CD4-positive, alpha-beta T cell (primary cell): ENCODE measurements at regions of chr4 and their contacts with region 1.

Region 1: DNA sequence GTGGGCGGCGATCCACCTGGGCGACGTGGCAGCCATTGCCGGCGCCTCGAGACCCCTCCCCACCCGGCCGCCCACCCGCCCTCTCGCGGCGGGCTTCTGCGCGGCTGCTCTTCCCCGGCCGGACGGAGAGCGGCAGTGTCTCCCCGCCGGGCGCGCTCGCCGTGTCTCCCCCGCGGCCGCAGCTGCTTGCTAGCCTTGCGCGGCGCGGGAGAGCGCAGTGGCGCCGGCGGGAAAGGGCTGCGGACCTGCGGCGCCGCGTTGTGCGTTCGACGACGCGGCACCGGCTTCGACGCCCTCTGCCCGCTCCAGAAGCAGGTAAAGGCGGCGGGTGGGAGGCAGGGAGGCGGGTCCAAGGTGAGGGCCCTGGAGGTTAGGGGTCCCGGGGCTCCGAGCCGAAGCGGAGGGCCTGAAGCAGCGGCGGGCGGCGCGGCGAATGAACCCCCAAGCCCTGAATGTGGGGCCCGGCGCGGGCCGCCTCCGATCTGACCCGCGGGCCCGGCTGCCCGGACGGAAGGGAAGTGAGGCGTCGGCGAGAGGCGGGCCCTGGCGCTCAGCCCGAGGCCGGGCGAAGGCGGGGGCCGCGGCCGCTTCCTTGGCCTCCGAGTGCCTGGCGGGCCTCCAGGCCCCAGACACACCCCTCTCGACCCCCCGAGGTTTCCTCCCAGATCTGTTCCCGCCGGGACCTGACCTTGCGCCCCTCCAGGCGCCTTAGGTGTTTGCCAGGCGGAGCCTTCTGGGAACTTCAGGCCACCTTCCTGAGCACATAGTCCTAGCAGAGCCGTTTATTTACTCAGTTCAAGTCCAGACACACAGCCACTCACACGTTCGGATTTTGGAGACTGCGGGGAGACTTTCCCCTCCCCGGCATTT is at the start of gene N4BP2:
- DNase-seq: peak; percentile 54 to 91 (median 71)
- ATAC-seq: peak; percentile 66
- H3K4me3 ChIP-seq: peak within 1 kb of the TSS; percentile 96
- H3K4me3 Mint-ChIP-seq: peak within 1 kb of the TSS; percentile 95
- H3K27ac ChIP-seq: peak within 1 kb of the TSS; percentile 83 to 89
- H3K27ac Mint-ChIP-seq: peak within 1 kb of the TSS; percentile 94
- H3K4me1 ChIP-seq: peaks cover 29% of the 10 kb centered on the region
- H3K4me1 Mint-ChIP-seq: peaks cover 40% of the 10 kb centered on the region
- H3K27me3 ChIP-seq: no peaks in the 10 kb centered on the region
- H3K27me3 Mint-ChIP-seq: no peaks in the 10 kb centered on the region
- CTCF ChIP-seq: peak; percentile 77
- total RNA-seq, gene N4BP2: 21.7 to 25.2 TPM

Region 2: GRCh38 chr4:39484582-39485272 is 572.2 kb before region 1 on chr4:
- CTCF ChIA-PET with region 1: no interaction called
- POLR2A ChIA-PET with region 1: no interaction called
- intact Hi-C with region 1: no loop called
- DNase-seq: no peak
- ATAC-seq: no peak
- H3K4me3 ChIP-seq: no peak overlapping the region
- H3K4me3 Mint-ChIP-seq: no peak overlapping the region
- H3K27ac ChIP-seq: no peak overlapping the region
- H3K27ac Mint-ChIP-seq: no peak overlapping the region
- H3K4me1 ChIP-seq: no peaks in the 10 kb centered on the region
- H3K4me1 Mint-ChIP-seq: no peaks in the 10 kb centered on the region
- H3K27me3 ChIP-seq: no peaks in the 10 kb centered on the region
- H3K27me3 Mint-ChIP-seq: no peaks in the 10 kb centered on the region
- CTCF ChIP-seq: no peak

Region 3: DNA sequence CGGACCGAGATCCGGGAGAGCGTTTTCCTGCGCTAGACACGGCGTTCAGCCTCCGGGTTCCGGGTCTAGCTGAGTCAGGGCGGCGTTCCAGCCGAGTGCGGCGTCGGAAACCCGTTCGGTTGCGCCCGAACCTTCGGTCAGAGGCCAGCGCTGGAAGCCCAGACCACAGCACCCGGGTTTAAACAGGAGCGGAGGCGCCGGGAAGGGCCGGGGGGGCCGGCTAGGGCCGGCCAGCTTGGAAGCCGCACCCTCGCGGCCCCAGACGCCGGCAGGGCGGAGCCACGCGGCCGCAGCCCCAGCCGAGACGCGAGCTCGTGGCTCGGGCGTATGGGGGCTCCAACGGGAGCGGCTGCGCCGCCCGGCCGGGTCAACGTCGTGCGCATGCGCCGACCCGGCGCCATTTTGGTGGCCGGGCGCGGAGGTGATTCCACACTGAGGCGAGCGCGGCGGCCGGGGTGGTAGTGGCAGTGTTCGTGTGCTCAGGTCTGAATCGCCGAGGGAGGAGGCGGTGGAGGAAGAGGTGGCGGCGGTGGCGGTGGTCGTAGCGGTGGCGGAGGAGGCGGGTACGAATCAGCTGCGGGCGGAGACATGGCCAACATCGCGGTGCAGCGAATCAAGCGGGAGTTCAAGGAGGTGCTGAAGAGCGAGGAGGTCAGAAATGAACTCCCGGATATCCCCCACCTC is 359.1 kb before region 1 on chr4 and contains the start of gene UBE2K:
- CTCF ChIA-PET with region 1: no interaction called
- POLR2A ChIA-PET with region 1: interaction called, 9 read pairs
- intact Hi-C with region 1: loop called in 1 of 2 experiments (anchors 2 kb)
- DNase-seq: peak; percentile 78 to 96 (median 86)
- ATAC-seq: peak; percentile 83
- H3K4me3 ChIP-seq: peak within 1 kb of the TSS; percentile 99
- H3K4me3 Mint-ChIP-seq: peak within 1 kb of the TSS; percentile 96
- H3K27ac ChIP-seq: peak within 1 kb of the TSS; percentile 92 to 93
- H3K27ac Mint-ChIP-seq: peak within 1 kb of the TSS; percentile 91
- H3K4me1 ChIP-seq: peaks cover 17% of the 10 kb centered on the region
- H3K4me1 Mint-ChIP-seq: peaks cover 56% of the 10 kb centered on the region
- H3K27me3 ChIP-seq: no peaks in the 10 kb centered on the region
- H3K27me3 Mint-ChIP-seq: no peaks in the 10 kb centered on the region
- CTCF ChIP-seq: no peak
- total RNA-seq, gene UBE2K: 35.9 to 41.3 TPM

Region 4: DNA sequence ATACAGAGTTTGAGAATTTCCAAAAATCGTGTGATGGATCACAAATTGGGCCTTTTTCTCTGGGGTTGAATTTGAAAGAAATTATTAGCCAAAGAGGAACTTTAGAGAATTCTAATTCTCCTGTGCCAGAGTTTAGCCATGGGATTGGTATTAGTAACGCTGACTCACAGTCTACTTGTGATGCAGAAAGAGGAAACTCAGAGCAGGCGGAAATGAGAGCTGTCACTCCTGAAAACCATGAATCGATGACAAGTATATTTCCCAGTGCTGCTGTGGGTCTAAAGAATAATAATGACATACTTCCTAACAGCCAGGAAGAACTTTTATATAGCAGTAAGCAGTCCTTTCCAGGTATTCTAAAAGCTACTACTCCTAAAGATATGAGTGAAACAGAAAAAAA is 64.6 kb after region 1 on chr4:
- CTCF ChIA-PET with region 1: interaction called, 3 read pairs
- POLR2A ChIA-PET with region 1: no interaction called
- intact Hi-C with region 1: loop called in 1 of 2 experiments (anchors 5 kb)
- DNase-seq: peak in 4 of 14 experiments; percentile 19 to 68 (median 45)
- ATAC-seq: no peak
- H3K4me3 ChIP-seq: no peak overlapping the region
- H3K4me3 Mint-ChIP-seq: no peak overlapping the region
- H3K27ac ChIP-seq: no peak overlapping the region
- H3K27ac Mint-ChIP-seq: peak overlapping the region; percentile 58
- H3K4me1 ChIP-seq: peaks cover 16% of the 10 kb centered on the region
- H3K4me1 Mint-ChIP-seq: peaks cover 50% of the 10 kb centered on the region
- H3K27me3 ChIP-seq: no peaks in the 10 kb centered on the region
- H3K27me3 Mint-ChIP-seq: no peaks in the 10 kb centered on the region
- CTCF ChIP-seq: no peak

Region 5: GRCh38 chr4:40193016-40193571 is 136.1 kb after region 1 on chr4:
- CTCF ChIA-PET with region 1: no interaction called
- POLR2A ChIA-PET with region 1: interaction called, 19 read pairs
- intact Hi-C with region 1: loop called in 1 of 2 experiments (anchors 5 kb)
- DNase-seq: peak in 8 of 14 experiments; percentile 43 to 79 (median 51)
- ATAC-seq: peak; percentile 25
- H3K4me3 ChIP-seq: peak overlapping the region; percentile 74
- H3K4me3 Mint-ChIP-seq: peak overlapping the region; percentile 94
- H3K27ac ChIP-seq: peak overlapping the region; percentile 67 to 99
- H3K27ac Mint-ChIP-seq: peak overlapping the region; percentile 99
- H3K4me1 ChIP-seq: peaks cover 43% of the 10 kb centered on the region
- H3K4me1 Mint-ChIP-seq: peaks cover 72% of the 10 kb centered on the region
- H3K27me3 ChIP-seq: no peaks in the 10 kb centered on the region
- H3K27me3 Mint-ChIP-seq: peaks cover 5% of the 10 kb centered on the region
- CTCF ChIP-seq: no peak

Region 6: GRCh38 chr4:40238700-40239548 is 182.0 kb after region 1 on chr4:
- CTCF ChIA-PET with region 1: no interaction called
- POLR2A ChIA-PET with region 1: interaction called, 4 read pairs
- intact Hi-C with region 1: loop called in 1 of 2 experiments (anchors 5 kb)
- DNase-seq: peak; percentile 50 to 95 (median 69)
- ATAC-seq: peak; percentile 93
- H3K4me3 ChIP-seq: peak overlapping the region; percentile 46
- H3K4me3 Mint-ChIP-seq: peak overlapping the region; percentile 55
- H3K27ac ChIP-seq: peak overlapping the region; percentile 79 to 97
- H3K27ac Mint-ChIP-seq: peak overlapping the region; percentile 93
- H3K4me1 ChIP-seq: peaks cover 99% of the 10 kb centered on the region
- H3K4me1 Mint-ChIP-seq: peaks cover 92% of the 10 kb centered on the region
- H3K27me3 ChIP-seq: no peaks in the 10 kb centered on the region
- H3K27me3 Mint-ChIP-seq: no peaks in the 10 kb centered on the region
- CTCF ChIP-seq: no peak

Region 7: DNA sequence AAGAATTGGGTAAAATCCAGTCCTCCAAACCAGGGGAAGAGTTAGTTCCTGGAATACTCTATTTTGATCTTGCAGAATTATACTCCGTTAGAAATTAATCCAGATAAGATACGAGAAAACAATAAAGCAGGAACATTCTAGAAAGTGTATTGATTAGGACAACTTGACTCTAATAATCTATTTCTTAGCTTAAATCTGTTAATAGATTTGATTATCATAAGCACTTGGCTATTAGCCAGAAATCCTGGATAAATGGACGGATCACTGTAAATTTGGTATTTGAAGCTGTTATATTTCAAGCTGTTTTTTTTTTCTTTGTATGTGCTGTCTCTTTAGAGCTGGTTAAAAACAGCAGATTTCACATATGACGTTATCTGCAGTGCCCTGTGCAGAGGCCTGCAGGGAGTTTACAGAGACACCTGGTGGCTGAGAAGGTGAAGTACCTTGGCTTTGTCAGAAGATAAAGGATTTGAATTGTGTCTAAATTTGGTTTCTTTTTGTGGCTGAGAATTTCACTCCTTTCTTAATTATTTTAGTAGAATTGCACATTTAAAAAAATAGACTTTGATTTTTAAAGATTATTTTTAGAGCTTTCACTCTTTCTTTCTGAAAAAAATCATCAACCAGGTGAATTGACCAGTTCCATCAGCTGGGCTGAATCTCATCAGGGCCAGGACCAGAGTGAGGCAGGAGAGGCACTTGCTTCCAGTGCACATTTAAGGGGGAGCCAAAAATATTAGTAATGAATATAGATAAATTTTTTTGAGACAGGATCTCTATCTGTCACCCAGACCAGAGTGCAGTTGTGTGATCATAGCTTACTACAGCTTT is 268.5 kb after region 1 on chr4:
- CTCF ChIA-PET with region 1: interaction called, 10 read pairs
- POLR2A ChIA-PET with region 1: interaction called, 13 read pairs
- intact Hi-C with region 1: loop called (anchors 1 to 2 kb)
- DNase-seq: peak; percentile 46 to 89 (median 56)
- ATAC-seq: peak; percentile 100
- H3K4me3 ChIP-seq: no peak overlapping the region
- H3K4me3 Mint-ChIP-seq: no peak overlapping the region
- H3K27ac ChIP-seq: no peak overlapping the region
- H3K27ac Mint-ChIP-seq: peak overlapping the region; percentile 6
- H3K4me1 ChIP-seq: no peaks in the 10 kb centered on the region
- H3K4me1 Mint-ChIP-seq: peaks cover 21% of the 10 kb centered on the region
- H3K27me3 ChIP-seq: no peaks in the 10 kb centered on the region
- H3K27me3 Mint-ChIP-seq: no peaks in the 10 kb centered on the region
- CTCF ChIP-seq: peak; percentile 89

Region 8: DNA sequence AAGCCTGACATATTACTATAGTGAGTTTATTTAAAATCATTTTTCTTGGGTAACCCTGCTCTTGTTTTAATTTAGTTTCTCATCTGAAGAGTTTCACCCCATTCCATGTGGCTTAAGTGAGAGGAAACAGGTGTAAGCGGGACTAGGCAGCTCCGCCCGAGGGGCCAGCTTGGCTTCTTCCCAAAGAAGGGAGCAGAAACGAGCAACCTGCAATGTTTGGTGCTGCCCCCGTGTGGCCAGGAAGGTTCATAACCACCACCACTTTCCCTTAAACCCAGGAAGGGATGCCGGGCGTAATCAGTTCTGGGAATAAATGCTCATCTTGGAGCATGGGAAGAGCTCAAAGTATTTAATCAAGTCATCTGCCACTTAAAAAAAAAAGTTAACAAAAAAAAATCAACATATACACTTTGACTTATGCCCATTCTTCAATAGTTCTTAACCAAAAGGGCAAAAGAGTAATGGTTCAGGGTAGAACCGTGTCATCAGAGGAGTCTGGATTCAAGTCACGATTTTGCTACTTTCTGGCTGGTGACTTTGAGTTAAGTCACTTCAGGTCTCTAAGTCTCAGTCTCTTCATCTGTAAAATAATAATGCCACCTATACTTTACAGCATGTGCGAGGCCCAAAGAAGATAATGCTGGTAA is 840.7 kb after region 1 on chr4:
- CTCF ChIA-PET with region 1: no interaction called
- POLR2A ChIA-PET with region 1: no interaction called
- intact Hi-C with region 1: loop called (anchors 5 kb)
- DNase-seq: peak; percentile 27 to 76 (median 48)
- ATAC-seq: peak; percentile 44
- H3K4me3 ChIP-seq: no peak overlapping the region
- H3K4me3 Mint-ChIP-seq: peak overlapping the region; percentile 66
- H3K27ac ChIP-seq: no peak overlapping the region
- H3K27ac Mint-ChIP-seq: no peak overlapping the region
- H3K4me1 ChIP-seq: no peaks in the 10 kb centered on the region
- H3K4me1 Mint-ChIP-seq: peaks cover 6% of the 10 kb centered on the region
- H3K27me3 ChIP-seq: no peaks in the 10 kb centered on the region
- H3K27me3 Mint-ChIP-seq: no peaks in the 10 kb centered on the region
- CTCF ChIP-seq: peak; percentile 90